ENCODE measurements at regions of chr20 and their contacts with region 1.

Region 1: DNA sequence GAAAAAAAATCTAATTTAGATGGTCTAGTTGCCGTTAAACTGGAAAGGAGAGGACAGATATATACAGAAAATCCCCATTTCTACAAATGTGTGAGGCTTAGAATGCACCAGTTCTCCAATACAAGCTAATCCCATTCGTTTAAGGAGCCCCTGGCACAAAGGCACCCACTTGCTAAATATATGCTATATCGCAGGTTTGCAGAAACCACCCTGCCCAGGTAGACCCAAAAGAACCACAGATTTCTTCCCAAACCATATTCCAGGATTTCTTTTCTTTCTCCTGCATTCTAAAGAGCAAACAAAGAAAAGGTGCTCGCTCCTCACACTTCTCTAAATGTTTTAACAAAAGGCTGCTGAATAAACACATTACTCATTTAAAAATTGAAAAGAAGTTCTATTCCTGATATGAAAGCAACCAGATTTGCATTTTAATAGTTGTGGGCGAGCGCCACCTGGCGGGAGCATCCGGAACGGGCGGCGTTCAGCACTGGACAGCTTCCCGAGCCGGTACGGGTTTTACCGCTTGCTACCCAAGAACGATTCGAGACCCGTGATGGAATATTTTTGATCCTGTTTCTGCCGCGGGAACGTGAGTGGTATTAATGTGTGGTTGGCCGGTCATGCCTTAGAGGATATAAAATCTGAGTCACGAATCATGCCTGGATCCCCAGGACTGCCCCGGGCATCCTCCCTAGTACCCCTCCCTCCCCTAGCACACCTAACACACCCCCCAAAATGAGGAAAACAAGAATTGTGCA is 2.1 kb downstream of the PTPRT start:
- DNase-seq: peak; percentile 57
- ATAC-seq: peak; percentile 63
- H3K4me3 ChIP-seq: no peak overlapping the region
- H3K27ac ChIP-seq: no peak overlapping the region
- H3K4me1 ChIP-seq: no peaks in the 10 kb centered on the region
- H3K27me3 ChIP-seq: peaks cover 9 to 53% of the 10 kb centered on the region in 2 experiments; a peak in 3 of 5 replicates
- CTCF ChIP-seq: peak; percentile 91
- EP300 ChIP-seq: no peak
- POLR2A ChIP-seq: no peak
- RAD21 ChIP-seq: peak; percentile 88

Region 2: GRCh38 chr20:42204203-42204942 is 983.3 kb before region 1 on chr20:
- CTCF ChIA-PET with region 1: interaction called, 3 read pairs
- POLR2A ChIA-PET with region 1: no interaction called
- in situ Hi-C with region 1: loop called (anchors 10 kb)
- intact Hi-C with region 1: no loop called
- DNase-seq: peak; percentile 28
- ATAC-seq: no peak
- H3K4me3 ChIP-seq: no peak overlapping the region
- H3K27ac ChIP-seq: no peak overlapping the region
- H3K4me1 ChIP-seq: no peaks in the 10 kb centered on the region
- H3K27me3 ChIP-seq: no peaks in the 10 kb centered on the region
- CTCF ChIP-seq: peak; percentile 41
- EP300 ChIP-seq: no peak
- POLR2A ChIP-seq: no peak
- RAD21 ChIP-seq: 0 out of 2 replicates have a peak, but pooled peaks have one; percentile 13

Region 3: GRCh38 chr20:43210901-43211300 is 23.2 kb after region 1 on chr20:
- CTCF ChIA-PET with region 1: no interaction called
- POLR2A ChIA-PET with region 1: no interaction called
- in situ Hi-C with region 1: no loop called
- intact Hi-C with region 1: no loop called
- DNase-seq: no peak
- ATAC-seq: no peak
- H3K4me3 ChIP-seq: no peak overlapping the region
- H3K27ac ChIP-seq: no peak overlapping the region
- H3K4me1 ChIP-seq: no peaks in the 10 kb centered on the region
- H3K27me3 ChIP-seq: peaks cover 0 to 17% of the 10 kb centered on the region in 2 experiments; a peak in 2 of 5 replicates
- CTCF ChIP-seq: no peak
- EP300 ChIP-seq: no peak
- POLR2A ChIP-seq: no peak
- RAD21 ChIP-seq: no peak

Measured in HepG2 (cell line).